ENCODE measurements at regions of chr3 and their contacts with region 1.

Region 1: DNA sequence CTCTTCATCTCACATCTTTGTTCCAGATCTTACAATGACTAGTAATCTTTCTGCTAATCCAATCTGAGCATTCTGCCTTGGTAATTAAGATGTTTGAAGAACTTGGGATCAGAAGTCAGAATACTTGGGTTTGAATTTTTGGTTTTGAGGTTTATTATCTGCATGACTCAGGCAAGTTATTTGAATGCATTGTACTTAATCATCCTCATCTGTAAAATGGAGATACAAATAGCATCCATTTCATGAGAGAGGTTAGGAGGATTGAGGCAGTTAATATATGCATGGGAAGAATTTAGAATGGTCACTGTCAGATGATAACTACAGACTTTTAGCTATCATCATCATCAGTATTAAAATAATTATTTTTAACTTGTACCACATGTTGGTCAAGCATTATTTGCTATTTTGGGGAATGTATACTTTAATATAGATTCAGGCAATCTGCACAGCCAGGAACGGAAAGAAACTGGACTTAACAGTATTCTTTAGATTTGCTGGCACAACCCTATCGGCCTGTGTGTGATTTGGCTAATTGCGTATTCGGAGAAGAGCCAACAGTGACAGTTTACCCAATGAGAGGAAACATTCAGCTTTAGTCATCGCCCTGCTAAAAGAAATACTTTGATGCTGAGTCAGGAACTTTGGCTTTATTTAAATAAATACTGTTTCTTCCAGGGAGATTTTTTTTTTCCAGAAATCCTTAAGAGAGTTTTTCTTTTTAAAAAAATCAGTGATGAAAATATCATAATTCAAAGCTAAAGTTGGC is 600.0 kb downstream of the ROBO1 start:
- DNase-seq: peak; percentile 64
- H3K4me3 ChIP-seq: no peak overlapping the region
- H3K27ac ChIP-seq: peak overlapping the region in 2 of 4 donors; percentile 14 to 54
- H3K4me1 ChIP-seq: peaks cover 0 to 19% (median 14%) of the 10 kb centered on the region in 4 donors
- H3K27me3 ChIP-seq: no peaks in the 10 kb centered on the region
- CTCF ChIP-seq: no peak
- EP300 ChIP-seq: no peak
- POLR2A ChIP-seq: no peak

Region 2: DNA sequence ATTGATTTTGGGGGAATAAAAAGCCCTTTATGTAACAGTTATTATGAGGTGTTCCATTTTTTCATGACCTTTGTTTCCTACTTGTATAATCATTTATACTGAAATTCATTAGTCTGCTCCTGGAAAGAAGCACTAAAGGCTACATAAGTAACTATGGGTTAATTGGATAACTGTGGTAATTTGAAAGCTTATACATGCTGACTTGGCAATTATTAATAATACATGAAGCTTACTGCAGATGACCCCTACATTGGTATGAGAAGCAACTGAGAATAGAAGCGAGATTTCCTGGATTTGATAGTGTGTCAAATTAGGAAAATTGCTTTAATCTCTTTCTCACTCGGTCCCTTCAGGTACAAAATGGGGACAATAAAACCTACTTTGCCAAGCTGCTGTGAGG is 58.1 kb before region 1 on chr3:
- intact Hi-C with region 1: loop called (anchors 10 kb)
- DNase-seq: no peak
- H3K4me3 ChIP-seq: no peak overlapping the region
- H3K27ac ChIP-seq: no peak overlapping the region
- H3K4me1 ChIP-seq: peaks cover 0 to 4% (median 0%) of the 10 kb centered on the region in 4 donors
- H3K27me3 ChIP-seq: no peaks in the 10 kb centered on the region
- CTCF ChIP-seq: no peak
- EP300 ChIP-seq: no peak
- POLR2A ChIP-seq: no peak

Region 3: DNA sequence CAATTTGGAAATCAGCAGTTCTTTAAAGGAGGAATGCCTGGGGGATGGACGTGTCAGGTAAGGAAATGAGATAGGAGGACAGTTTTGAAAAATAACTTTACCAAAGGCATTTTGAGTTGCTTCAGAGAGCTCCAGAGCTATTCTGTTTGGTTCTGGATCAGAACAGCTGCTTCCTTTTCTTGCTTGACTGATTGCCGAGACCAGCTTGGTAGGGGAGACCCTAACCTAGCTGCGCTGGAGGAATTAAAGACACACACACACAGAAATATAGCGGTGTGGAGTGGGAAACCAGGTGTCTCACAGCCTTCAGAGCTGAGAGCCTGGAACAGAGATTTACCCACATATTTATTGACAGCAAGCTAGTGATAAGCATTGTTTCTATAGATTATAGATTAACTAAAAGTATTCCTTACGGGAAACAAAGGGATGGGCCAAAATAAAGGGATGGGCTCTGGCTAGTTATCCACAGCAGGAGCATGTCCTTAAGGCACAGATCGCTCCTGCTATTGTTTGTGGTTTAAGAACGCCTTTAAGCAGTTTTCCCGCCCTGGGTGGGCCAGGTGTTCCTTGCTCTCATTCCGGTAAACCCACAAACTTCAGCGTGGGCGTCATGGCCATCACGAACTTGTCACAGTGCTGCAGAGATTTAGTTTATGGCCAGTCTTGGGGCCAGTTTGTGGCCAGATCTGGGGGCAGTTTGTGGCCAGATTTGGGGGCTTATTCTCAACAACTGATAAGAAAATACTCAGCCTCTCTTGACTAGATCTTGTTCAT is 43.9 kb after region 1 on chr3:
- intact Hi-C with region 1: no loop called
- DNase-seq: no peak
- H3K4me3 ChIP-seq: no peak overlapping the region
- H3K27ac ChIP-seq: no peak overlapping the region
- H3K4me1 ChIP-seq: peaks cover 0 to 5% (median 0%) of the 10 kb centered on the region in 4 donors
- H3K27me3 ChIP-seq: no peaks in the 10 kb centered on the region
- CTCF ChIP-seq: no peak
- EP300 ChIP-seq: no peak
- POLR2A ChIP-seq: no peak